Stomach (tissue), 19 donors: ENCODE measurements at regions of chr5 and their contacts with region 1.

Region 1: GRCh38 chr5:103258368-103258956 is at the start of gene MACIR:
- DNase-seq: peak; percentile 97 to 99
- H3K4me3 ChIP-seq: peak within 1 kb of the TSS; percentile 84 to 97 (median 88)
- H3K27ac ChIP-seq: peak within 1 kb of the TSS; percentile 88 to 95 (median 92)
- H3K4me1 ChIP-seq: peaks cover 0 to 41% (median 25%) of the 10 kb centered on the region in 4 donors
- H3K27me3 ChIP-seq: no peaks in the 10 kb centered on the region
- CTCF ChIP-seq: peak in 3 of 7 experiments; percentile 10 to 39 (median 27)
- EP300 ChIP-seq: no peak
- POLR2A ChIP-seq: peak in 1 of 4 donors; percentile 20
- total RNA-seq, gene MACIR: 1.2 to 39.7 (median 23.5) TPM

Region 2: GRCh38 chr5:102223542-102224477 is 1034.7 kb before region 1 on chr5:
- intact Hi-C with region 1: no loop called
- DNase-seq: peak in 1 of 2 donors; percentile 61
- H3K4me3 ChIP-seq: no peak overlapping the region
- H3K27ac ChIP-seq: no peak overlapping the region
- H3K4me1 ChIP-seq: no peaks in the 10 kb centered on the region
- H3K27me3 ChIP-seq: no peaks in the 10 kb centered on the region
- CTCF ChIP-seq: peak in 5 of 7 experiments; percentile 28 to 64 (median 41)
- EP300 ChIP-seq: no peak
- POLR2A ChIP-seq: no peak

Region 3: GRCh38 chr5:103315455-103315854 is 57.0 kb after region 1 on chr5:
- intact Hi-C with region 1: no loop called
- DNase-seq: no peak
- H3K4me3 ChIP-seq: no peak overlapping the region
- H3K27ac ChIP-seq: no peak overlapping the region
- H3K4me1 ChIP-seq: no peaks in the 10 kb centered on the region
- H3K27me3 ChIP-seq: no peaks in the 10 kb centered on the region
- CTCF ChIP-seq: no peak
- EP300 ChIP-seq: no peak
- POLR2A ChIP-seq: no peak

Region 4: DNA sequence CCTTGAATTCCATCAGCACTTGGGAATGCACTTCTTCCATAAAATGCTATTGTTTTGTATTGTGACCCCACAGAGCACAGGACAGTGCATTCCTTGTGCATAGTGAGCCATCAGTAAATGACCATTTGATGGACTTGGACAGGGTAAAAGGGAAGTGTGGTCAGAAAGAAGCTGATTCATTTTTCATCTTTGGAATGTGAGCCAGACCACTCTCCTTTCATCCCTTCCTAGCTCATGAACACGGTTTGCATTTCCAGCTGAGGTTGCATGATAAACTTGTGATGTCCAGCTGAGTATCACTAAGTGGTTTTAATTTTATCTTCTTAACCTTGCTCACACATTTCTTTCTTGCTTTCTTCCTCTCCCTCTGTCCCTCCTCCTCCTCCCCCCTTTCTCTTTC is 202.8 kb after region 1 on chr5:
- intact Hi-C with region 1: loop called (anchors 10 kb)
- DNase-seq: no peak
- H3K4me3 ChIP-seq: no peak overlapping the region
- H3K27ac ChIP-seq: no peak overlapping the region
- H3K4me1 ChIP-seq: no peaks in the 10 kb centered on the region
- H3K27me3 ChIP-seq: no peaks in the 10 kb centered on the region
- CTCF ChIP-seq: no peak
- EP300 ChIP-seq: no peak
- POLR2A ChIP-seq: no peak